ENCODE measurements at regions of chr18 and their contacts with region 1.

Region 1: GRCh38 chr18:61502472-61502871 is 169.2 kb downstream of the CDH20 start:
- DNase-seq: peak in 1 of 2 donors; percentile 17
- ATAC-seq: peak; percentile 60

Region 2: GRCh38 chr18:60684843-60685513 is 817.5 kb before region 1 on chr18:
- intact Hi-C with region 1: loop called in 1 of 2 experiments (anchors 10 kb)
- DNase-seq: no peak
- ATAC-seq: no peak

Region 3: DNA sequence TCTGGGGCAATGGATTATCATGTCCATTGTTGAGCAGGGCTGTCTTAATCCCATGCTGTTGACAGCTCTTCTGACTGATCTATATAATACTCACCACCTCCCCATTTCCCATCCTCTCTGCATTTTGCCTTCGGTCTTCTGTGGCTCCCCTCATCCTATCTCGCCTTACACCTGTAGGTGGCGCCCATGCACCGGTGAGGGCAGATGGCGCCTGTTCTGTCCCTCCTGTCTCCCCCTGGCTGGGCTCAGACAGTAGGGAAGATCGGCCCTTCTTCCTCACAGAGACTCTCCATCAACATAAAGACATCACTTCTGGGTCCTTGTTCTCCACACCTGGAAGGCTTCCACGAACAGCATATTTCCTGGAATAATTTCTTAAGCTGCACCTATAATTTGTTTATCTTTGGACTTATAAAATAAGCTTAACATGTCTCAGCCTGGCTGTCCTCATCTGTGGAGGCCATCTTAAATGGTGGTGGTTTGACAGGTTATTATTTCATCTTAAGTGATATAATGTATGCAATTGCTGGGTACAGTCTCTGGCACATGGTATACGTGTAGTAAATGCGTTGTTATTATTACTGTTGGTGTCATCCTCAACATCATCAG is 180.1 kb before region 1 on chr18:
- intact Hi-C with region 1: loop called in 1 of 2 experiments (anchors 10 kb)
- DNase-seq: peak in 1 of 2 donors; percentile 75
- ATAC-seq: peak; percentile 90

Region 4: GRCh38 chr18:61669320-61669719 is 166.8 kb after region 1 on chr18:
- intact Hi-C with region 1: no loop called
- DNase-seq: no peak
- ATAC-seq: peak; percentile 83

Region 5: DNA sequence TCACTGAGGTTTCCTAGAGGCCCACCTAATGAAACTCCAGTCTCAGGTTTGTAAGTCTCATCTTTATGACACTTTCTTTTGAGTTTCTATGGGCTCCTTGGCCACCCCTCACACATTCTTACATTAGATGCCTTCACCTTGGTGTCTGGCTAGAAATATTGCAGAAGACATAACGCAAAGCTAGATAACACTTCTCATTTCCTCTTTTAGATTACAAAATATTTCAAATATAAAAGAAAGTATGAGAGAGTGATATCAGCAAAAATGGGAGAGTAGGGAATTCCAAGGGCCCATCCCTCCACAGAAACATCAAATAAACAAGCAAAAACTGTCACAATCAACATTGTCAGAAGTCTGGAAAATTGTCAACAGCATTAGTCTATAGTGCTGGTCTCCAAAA is 977.1 kb after region 1 on chr18:
- intact Hi-C with region 1: no loop called
- DNase-seq: no peak
- ATAC-seq: no peak